CD8-positive, alpha-beta T cell (primary cell): ENCODE measurements at regions of chr16 and their contacts with region 1.

Region 1: DNA sequence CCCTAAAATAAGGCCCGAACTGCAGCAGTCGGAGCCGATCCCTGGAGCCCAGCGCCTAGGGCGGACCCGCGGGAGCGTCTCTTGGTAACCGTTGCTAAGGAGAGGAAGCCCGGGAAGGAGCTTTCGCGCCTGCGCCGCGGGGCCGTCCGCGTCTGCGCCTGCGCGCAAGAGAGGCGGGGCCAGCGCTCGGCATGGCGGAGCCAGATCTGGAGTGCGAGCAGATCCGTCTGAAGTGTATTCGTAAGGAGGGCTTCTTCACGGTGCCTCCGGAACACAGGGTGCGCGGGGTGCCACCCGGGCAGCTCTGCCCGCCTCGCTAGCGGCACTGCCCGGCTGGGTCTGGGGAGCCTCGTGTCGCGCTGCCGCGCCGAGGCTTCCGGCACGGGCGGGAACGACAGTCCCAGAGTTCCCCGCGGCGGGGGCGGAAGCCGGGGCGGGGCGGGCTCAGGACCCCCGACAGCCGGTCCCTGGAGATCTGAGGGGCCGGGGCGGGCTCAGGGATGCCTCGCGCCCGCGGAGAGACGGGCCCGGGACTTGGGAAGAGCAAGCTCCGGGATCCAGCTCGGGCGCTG is at the start of gene CDK10:
- DNase-seq: peak; percentile 76 to 94 (median 88)
- ATAC-seq: peak; percentile 92
- H3K4me3 ChIP-seq: peak within 1 kb of the TSS; percentile 79 to 98
- H3K4me3 Mint-ChIP-seq: peak within 1 kb of the TSS; percentile 89
- H3K27ac ChIP-seq: peak within 1 kb of the TSS; percentile 76 to 84
- H3K27ac Mint-ChIP-seq: peak within 1 kb of the TSS; percentile 92
- H3K4me1 ChIP-seq: peaks cover 15% of the 10 kb centered on the region
- H3K4me1 Mint-ChIP-seq: peaks cover 14% of the 10 kb centered on the region
- H3K27me3 ChIP-seq: no peaks in the 10 kb centered on the region
- H3K27me3 Mint-ChIP-seq: no peaks in the 10 kb centered on the region
- CTCF ChIP-seq: no peak
- total RNA-seq, gene CDK10: 67.0 to 73.1 TPM

Region 2: GRCh38 chr16:89122322-89122851 is 564.2 kb before region 1 on chr16:
- CTCF ChIA-PET with region 1: no interaction called
- POLR2A ChIA-PET with region 1: no interaction called
- intact Hi-C with region 1: no loop called
- DNase-seq: peak; percentile 43 to 90 (median 76)
- ATAC-seq: peak; percentile 97
- H3K4me3 ChIP-seq: peak overlapping the region in 1 of 2 experiments; percentile 32
- H3K4me3 Mint-ChIP-seq: peak overlapping the region; percentile 53
- H3K27ac ChIP-seq: peak overlapping the region in 1 of 2 experiments; percentile 21
- H3K27ac Mint-ChIP-seq: peak overlapping the region; percentile 94
- H3K4me1 ChIP-seq: peaks cover 27% of the 10 kb centered on the region
- H3K4me1 Mint-ChIP-seq: peaks cover 33% of the 10 kb centered on the region
- H3K27me3 ChIP-seq: no peaks in the 10 kb centered on the region
- H3K27me3 Mint-ChIP-seq: no peaks in the 10 kb centered on the region
- CTCF ChIP-seq: no peak

Region 3: DNA sequence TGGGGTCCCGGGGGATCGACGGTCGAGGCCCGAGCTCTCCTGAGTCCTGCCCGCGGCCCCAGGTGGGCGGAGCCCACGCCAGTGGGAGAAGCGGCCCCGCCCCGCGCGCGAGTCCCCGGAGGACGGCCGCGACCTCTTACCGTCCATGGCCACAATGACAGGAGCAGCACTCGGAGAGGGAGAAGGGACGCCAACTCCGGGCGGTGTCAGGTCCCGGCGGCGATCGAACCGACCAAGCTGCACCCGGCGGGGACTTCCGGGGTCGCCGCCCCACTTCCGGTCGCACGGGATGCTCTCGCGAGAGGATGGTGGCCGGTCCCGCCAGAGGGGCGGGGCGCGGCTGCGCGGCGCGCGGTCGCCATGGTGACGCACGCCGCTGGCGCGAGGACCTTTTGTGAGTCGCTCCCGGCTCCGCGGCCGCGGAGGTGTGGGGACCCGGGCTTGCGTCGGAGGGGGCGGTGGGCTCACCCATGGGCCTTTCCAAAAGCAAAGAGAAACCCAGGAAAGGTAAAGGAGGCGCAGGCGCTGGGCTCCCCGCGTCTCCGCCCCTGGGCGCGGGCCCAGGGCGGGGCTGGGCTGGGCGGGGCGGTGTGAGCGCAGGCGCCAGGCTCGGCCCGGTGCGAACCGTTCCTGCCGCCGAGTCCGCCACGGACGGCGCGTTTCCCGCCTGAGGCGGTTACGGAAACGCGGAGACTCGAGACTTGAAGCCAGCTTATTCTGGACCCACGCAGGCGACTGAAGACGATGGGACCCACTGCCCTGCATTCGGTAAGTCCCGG is 29.0 kb before region 1 on chr16 and contains the starts of genes CHMP1A and SPATA33:
- CTCF ChIA-PET with region 1: no interaction called
- POLR2A ChIA-PET with region 1: no interaction called
- intact Hi-C with region 1: loop called (anchors 1 to 2 kb)
- DNase-seq: peak; percentile 85 to 97 (median 91)
- ATAC-seq: peak; percentile 88
- H3K4me3 ChIP-seq: peak within 1 kb of the TSS; percentile 73 to 91
- H3K4me3 Mint-ChIP-seq: peak within 1 kb of the TSS; percentile 80
- H3K27ac ChIP-seq: peak within 1 kb of the TSS; percentile 81 to 85
- H3K27ac Mint-ChIP-seq: peak within 1 kb of the TSS; percentile 64
- H3K4me1 ChIP-seq: peaks cover 19% of the 10 kb centered on the region
- H3K4me1 Mint-ChIP-seq: peaks cover 29% of the 10 kb centered on the region
- H3K27me3 ChIP-seq: no peaks in the 10 kb centered on the region
- H3K27me3 Mint-ChIP-seq: no peaks in the 10 kb centered on the region
- CTCF ChIP-seq: no peak
- total RNA-seq, gene CHMP1A: 82.9 to 90.8 TPM
- total RNA-seq, gene SPATA33: 4.8 to 5.1 TPM

Region 4: GRCh38 chr16:90046971-90047713 is 360.5 kb after region 1 on chr16:
- CTCF ChIA-PET with region 1: no interaction called
- POLR2A ChIA-PET with region 1: no interaction called
- intact Hi-C with region 1: no loop called
- DNase-seq: peak in 2 of 9 experiments; percentile 18 to 39
- ATAC-seq: peak; percentile 25
- H3K4me3 ChIP-seq: peak overlapping the region; percentile 12 to 15
- H3K4me3 Mint-ChIP-seq: no peak overlapping the region
- H3K27ac ChIP-seq: no peak overlapping the region
- H3K27ac Mint-ChIP-seq: no peak overlapping the region
- H3K4me1 ChIP-seq: peaks cover 10% of the 10 kb centered on the region
- H3K4me1 Mint-ChIP-seq: peaks cover 7% of the 10 kb centered on the region
- H3K27me3 ChIP-seq: peaks cover 0 to 9% of the 10 kb centered on the region in 2 experiments
- H3K27me3 Mint-ChIP-seq: peaks cover 13% of the 10 kb centered on the region
- CTCF ChIP-seq: no peak